Activated CD4-positive, alpha-beta T cell treated with anti-CD3 and anti-CD28 coated beads for 36 hours (primary cell): ENCODE measurements at regions of chr17 and their contacts with region 1.

Region 1: GRCh38 chr17:59440784-59441441 is 109.5 kb downstream of the YPEL2 start:
- DNase-seq: peak; percentile 94
- ATAC-seq: peak; percentile 95
- H3K4me3 Mint-ChIP-seq: peak overlapping the region; percentile 57
- H3K27ac Mint-ChIP-seq: peak overlapping the region; percentile 90
- H3K4me1 Mint-ChIP-seq: peaks cover 53% of the 10 kb centered on the region
- H3K27me3 Mint-ChIP-seq: peaks cover 3% of the 10 kb centered on the region

Region 2: DNA sequence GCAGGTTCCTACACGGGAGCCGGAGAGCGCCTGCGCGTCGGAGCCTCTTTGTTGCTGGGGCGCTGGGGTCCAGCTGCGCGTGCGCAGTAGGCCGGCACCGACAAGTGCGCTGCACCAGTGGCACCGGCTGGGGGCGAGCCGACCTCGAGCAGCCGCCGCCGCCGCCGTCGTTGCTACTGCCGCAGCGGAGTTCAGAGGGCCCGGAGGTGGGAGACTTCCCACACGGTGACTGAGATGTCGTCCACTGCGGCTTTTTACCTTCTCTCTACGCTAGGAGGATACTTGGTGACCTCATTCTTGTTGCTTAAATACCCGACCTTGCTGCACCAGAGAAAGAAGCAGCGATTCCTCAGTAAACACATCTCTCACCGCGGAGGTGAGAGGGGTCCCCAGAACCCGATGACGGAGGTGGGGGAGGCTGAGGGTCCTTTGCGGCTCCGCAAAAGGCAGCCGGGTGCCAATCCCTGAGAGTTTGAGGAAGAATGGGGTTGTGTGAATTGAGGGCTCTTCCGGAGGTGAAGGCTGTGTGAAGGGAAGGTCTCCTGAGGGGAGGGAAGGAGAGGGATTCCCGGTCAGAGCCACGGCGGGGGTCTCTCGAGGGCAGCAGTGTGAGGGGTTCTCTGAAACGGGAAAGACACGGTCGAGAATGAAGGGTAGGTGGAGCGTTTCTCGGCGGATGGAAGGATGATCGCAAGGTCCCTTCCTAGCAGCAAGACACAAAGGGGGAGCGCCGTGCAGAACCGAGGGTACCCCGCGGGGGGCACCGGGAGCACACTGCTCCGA is 220.3 kb before region 1 on chr17 and contains the start of gene GDPD1:
- CTCF ChIA-PET with region 1: interaction called, 3 read pairs
- POLR2A ChIA-PET with region 1: no interaction called
- intact Hi-C with region 1: loop called (anchors 1 kb)
- DNase-seq: peak; percentile 99
- ATAC-seq: peak; percentile 99
- H3K4me3 Mint-ChIP-seq: peak within 1 kb of the TSS; percentile 93
- H3K27ac Mint-ChIP-seq: peak within 1 kb of the TSS; percentile 86
- H3K4me1 Mint-ChIP-seq: peaks cover 12% of the 10 kb centered on the region
- H3K27me3 Mint-ChIP-seq: no peaks in the 10 kb centered on the region
- total RNA-seq, gene GDPD1: 2.5 to 2.7 TPM

Region 3: DNA sequence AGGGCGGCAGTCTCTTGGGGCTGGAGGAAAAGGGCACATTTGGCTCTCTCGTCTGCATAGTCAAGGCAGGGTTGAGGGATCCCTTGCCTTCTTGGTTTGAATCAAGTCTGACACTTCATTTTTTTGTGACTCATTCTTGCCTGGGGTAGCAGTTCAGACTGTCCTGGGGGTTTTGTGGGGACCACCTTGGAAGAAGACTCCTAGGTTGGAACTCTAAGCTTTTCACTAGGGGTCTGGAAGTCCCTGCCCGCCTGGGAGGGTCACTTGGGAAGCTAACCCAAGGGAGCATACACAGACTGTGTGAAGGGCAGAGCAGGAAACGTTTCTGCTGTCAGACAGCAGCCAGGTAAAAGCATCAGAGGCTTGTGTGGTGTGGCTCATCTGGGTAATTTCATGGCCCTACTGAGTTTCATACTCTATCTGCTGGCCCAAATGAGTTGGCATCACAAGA is 98.2 kb before region 1 on chr17:
- CTCF ChIA-PET with region 1: interaction called, 9 read pairs
- POLR2A ChIA-PET with region 1: no interaction called
- intact Hi-C with region 1: loop called in 1 of 2 experiments (anchors 1 kb)
- DNase-seq: peak; percentile 62
- ATAC-seq: peak; percentile 96
- H3K4me3 Mint-ChIP-seq: no peak overlapping the region
- H3K27ac Mint-ChIP-seq: peak overlapping the region; percentile 73
- H3K4me1 Mint-ChIP-seq: peaks cover 52% of the 10 kb centered on the region
- H3K27me3 Mint-ChIP-seq: no peaks in the 10 kb centered on the region

Region 4: GRCh38 chr17:59361916-59362810 is 78.8 kb before region 1 on chr17:
- CTCF ChIA-PET with region 1: interaction called, 6 read pairs
- POLR2A ChIA-PET with region 1: no interaction called
- intact Hi-C with region 1: loop called (anchors 1 to 2 kb)
- DNase-seq: peak; percentile 55
- ATAC-seq: peak; percentile 73
- H3K4me3 Mint-ChIP-seq: peak overlapping the region; percentile 60
- H3K27ac Mint-ChIP-seq: peak overlapping the region; percentile 96
- H3K4me1 Mint-ChIP-seq: peaks cover 78% of the 10 kb centered on the region
- H3K27me3 Mint-ChIP-seq: no peaks in the 10 kb centered on the region

Region 5: DNA sequence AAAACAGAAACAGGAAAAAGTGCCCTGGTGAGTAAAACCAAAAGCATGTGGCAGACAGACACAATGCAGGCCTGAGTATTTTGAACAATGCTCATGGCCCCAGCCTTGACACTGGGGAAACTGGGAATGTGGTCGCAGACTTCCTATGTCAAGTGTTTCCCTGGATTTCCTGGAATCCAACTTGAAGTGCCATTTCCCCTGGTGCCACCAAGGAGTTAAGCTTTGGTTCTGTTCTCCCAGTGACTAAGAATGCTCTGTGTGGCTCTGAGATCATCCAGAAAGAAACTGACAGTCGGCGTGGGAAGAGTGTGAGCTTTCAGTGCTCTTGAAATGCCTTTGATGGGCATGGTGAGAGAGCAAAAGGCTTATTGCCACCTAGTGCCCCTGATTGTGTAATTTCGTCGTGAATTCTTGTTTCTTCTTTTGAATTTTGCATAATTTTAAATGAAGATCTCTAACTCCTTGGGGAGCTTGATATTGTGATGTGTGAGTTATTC is 13.4 kb before region 1 on chr17:
- CTCF ChIA-PET with region 1: interaction called, 36 read pairs
- POLR2A ChIA-PET with region 1: interaction called, 4 read pairs
- intact Hi-C with region 1: no loop called
- DNase-seq: peak; percentile 81
- ATAC-seq: peak; percentile 99
- H3K4me3 Mint-ChIP-seq: no peak overlapping the region
- H3K27ac Mint-ChIP-seq: no peak overlapping the region
- H3K4me1 Mint-ChIP-seq: peaks cover 25% of the 10 kb centered on the region
- H3K27me3 Mint-ChIP-seq: peaks cover 3% of the 10 kb centered on the region

Region 6: GRCh38 chr17:59451706-59452105 is 10.8 kb after region 1 on chr17:
- CTCF ChIA-PET with region 1: interaction called, 13 read pairs
- POLR2A ChIA-PET with region 1: no interaction called
- intact Hi-C with region 1: no loop called
- DNase-seq: no peak
- ATAC-seq: peak; percentile 33
- H3K4me3 Mint-ChIP-seq: no peak overlapping the region
- H3K27ac Mint-ChIP-seq: no peak overlapping the region
- H3K4me1 Mint-ChIP-seq: no peaks in the 10 kb centered on the region
- H3K27me3 Mint-ChIP-seq: no peaks in the 10 kb centered on the region

Region 7: GRCh38 chr17:59456933-59457573 is 16.1 kb after region 1 on chr17:
- CTCF ChIA-PET with region 1: interaction called, 13 read pairs
- POLR2A ChIA-PET with region 1: no interaction called
- intact Hi-C with region 1: no loop called
- DNase-seq: no peak
- ATAC-seq: no peak
- H3K4me3 Mint-ChIP-seq: no peak overlapping the region
- H3K27ac Mint-ChIP-seq: no peak overlapping the region
- H3K4me1 Mint-ChIP-seq: no peaks in the 10 kb centered on the region
- H3K27me3 Mint-ChIP-seq: no peaks in the 10 kb centered on the region

Region 8: DNA sequence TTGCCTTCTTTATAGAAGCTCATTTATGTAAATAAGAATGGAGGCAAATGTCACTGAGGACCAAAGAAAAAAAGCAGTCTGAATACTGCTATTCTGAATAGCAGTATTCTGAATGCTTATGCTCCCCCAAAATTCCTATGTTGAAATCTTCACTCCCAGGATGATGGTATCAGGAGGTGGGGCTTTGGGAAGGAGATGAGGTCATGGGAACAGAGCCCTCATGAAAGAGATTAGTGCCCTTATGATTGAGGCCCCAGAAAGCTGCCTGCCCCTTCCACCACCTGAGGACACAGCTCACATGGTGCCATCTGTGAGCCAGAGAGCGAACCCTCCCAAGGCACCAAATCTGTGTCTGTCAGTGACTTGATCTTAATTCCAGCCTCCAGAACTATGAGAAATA is 609.0 kb after region 1 on chr17:
- CTCF ChIA-PET with region 1: no interaction called
- POLR2A ChIA-PET with region 1: no interaction called
- intact Hi-C with region 1: no loop called
- DNase-seq: no peak
- ATAC-seq: no peak
- H3K4me3 Mint-ChIP-seq: no peak overlapping the region
- H3K27ac Mint-ChIP-seq: no peak overlapping the region
- H3K4me1 Mint-ChIP-seq: no peaks in the 10 kb centered on the region
- H3K27me3 Mint-ChIP-seq: no peaks in the 10 kb centered on the region